ENCODE measurements at regions of chr14 and their contacts with region 1.

Region 1: DNA sequence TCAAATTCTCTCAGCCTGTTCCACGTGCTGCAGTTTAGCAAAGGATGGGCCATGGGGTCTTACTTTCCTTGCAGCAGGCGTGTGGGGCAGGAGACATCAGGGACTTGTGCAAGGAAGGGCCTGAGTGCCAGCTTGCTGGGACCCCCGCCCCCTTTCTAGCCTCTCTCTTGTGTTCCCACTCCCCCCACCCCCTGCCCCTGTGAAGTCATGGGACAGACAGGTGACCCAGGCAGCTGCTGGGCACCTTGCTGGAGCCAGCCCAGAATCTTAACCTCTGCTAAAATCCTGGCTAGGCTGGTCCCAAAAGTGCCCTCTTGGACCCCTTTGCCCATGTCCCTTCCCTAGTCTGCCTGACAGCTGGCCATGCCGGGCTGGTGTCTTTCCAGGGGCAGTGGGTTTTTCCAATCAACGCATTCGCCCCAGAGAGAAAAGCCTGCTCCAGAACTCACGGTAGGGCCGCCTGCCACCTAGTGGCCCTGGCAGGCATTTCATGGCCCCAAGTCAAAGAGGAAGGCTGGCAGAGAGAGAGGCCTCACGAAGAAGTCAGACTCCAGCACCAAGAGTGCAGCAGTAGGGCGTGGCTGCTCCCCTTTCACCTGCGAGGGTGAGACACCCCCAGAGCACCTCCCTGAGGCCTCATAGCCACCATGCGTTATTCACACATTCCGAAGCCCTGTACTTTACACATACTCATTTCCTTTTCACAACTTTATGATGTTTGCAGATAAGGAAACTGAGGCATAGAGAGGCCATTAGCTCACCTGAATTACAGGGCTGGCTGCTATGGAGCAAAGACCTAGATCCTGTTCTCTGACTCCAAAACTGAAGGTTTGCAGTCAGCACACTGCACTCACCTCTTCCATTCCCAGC is 67.4 kb downstream of the LGMN start:
- DNase-seq: peak; percentile 50 to 83
- H3K4me3 ChIP-seq: no peak overlapping the region
- H3K27ac ChIP-seq: no peak overlapping the region
- H3K4me1 ChIP-seq: peaks cover 0 to 3% (median 0%) of the 10 kb centered on the region in 4 experiments; a peak in 1 of 7 replicates
- H3K27me3 ChIP-seq: no peaks in the 10 kb centered on the region
- CTCF ChIP-seq: peak; percentile 90 to 97 (median 94)
- EP300 ChIP-seq: no peak
- POLR2A ChIP-seq: no peak
- RAD21 ChIP-seq: peak; percentile 95

Region 2: GRCh38 chr14:92585981-92586937 is 94.8 kb before region 1 on chr14:
- CTCF ChIA-PET with region 1: interaction called, 39 read pairs
- POLR2A ChIA-PET with region 1: no interaction called
- DNase-seq: no peak
- H3K4me3 ChIP-seq: no peak overlapping the region
- H3K27ac ChIP-seq: no peak overlapping the region
- H3K4me1 ChIP-seq: no peaks in the 10 kb centered on the region; a peak in 1 of 7 replicates
- H3K27me3 ChIP-seq: no peaks in the 10 kb centered on the region
- CTCF ChIP-seq: no peak
- EP300 ChIP-seq: no peak
- POLR2A ChIP-seq: no peak
- RAD21 ChIP-seq: no peak

Region 3: GRCh38 chr14:92603309-92604242 is 77.4 kb before region 1 on chr14:
- CTCF ChIA-PET with region 1: interaction called, 31 read pairs
- POLR2A ChIA-PET with region 1: no interaction called
- DNase-seq: no peak
- H3K4me3 ChIP-seq: no peak overlapping the region
- H3K27ac ChIP-seq: no peak overlapping the region
- H3K4me1 ChIP-seq: no peaks in the 10 kb centered on the region
- H3K27me3 ChIP-seq: no peaks in the 10 kb centered on the region
- CTCF ChIP-seq: peak; percentile 31 to 39 (median 35); a peak in 3 of 4 replicates
- EP300 ChIP-seq: no peak
- POLR2A ChIP-seq: no peak
- RAD21 ChIP-seq: peak; percentile 41 to 54

Region 4: DNA sequence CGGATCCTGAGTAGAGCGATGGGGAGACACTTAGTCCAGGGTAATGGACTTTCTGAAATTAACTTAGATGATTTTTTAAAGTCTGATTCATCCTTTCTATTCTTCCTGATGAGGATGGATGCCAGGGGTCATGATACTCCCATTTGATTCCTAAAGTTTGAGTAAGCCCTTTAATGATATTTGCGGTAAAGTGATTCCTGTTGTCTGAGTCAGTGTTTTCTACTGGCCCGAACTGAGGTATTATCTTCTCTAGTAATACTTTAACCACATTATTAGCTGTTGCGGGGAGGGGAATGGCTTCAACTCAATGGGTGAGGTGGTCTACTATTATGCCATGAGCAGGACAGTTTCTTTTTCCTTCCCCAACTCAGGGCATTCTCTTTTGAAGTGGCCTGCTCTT is 55.8 kb before region 1 on chr14:
- CTCF ChIA-PET with region 1: interaction called, 15 read pairs
- POLR2A ChIA-PET with region 1: no interaction called
- DNase-seq: no peak
- H3K4me3 ChIP-seq: no peak overlapping the region
- H3K27ac ChIP-seq: no peak overlapping the region
- H3K4me1 ChIP-seq: peaks cover 0 to 19% (median 8%) of the 10 kb centered on the region in 4 experiments; a peak in 3 of 7 replicates
- H3K27me3 ChIP-seq: no peaks in the 10 kb centered on the region
- CTCF ChIP-seq: no peak
- EP300 ChIP-seq: no peak
- POLR2A ChIP-seq: no peak
- RAD21 ChIP-seq: no peak

Region 5: DNA sequence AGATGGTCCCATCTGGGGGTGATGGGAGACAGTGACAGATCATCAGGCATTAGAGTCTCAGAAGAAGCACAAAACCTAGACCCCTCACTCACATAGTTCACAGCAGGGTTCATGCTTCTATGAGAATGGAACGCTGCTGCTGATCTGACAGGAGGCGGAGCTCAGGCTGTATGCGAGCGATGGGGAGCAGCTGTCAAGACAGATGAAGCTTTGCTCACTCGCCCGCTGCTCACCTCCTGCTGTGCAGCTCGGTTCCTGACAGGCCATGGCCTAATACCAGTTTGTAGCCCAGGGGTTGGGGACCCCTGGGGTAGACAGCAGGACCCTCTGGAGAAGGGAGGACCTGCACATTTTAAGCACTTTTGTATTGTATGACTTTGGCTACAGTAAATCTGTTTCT is 43.8 kb before region 1 on chr14:
- CTCF ChIA-PET with region 1: interaction called, 10 read pairs
- POLR2A ChIA-PET with region 1: no interaction called
- DNase-seq: no peak
- H3K4me3 ChIP-seq: no peak overlapping the region
- H3K27ac ChIP-seq: no peak overlapping the region
- H3K4me1 ChIP-seq: peaks cover 0 to 2% (median under 1%) of the 10 kb centered on the region in 4 experiments; a peak in 1 of 7 replicates
- H3K27me3 ChIP-seq: no peaks in the 10 kb centered on the region; a peak in 1 of 7 replicates
- CTCF ChIP-seq: no peak
- EP300 ChIP-seq: no peak
- POLR2A ChIP-seq: no peak
- RAD21 ChIP-seq: no peak